Posterior vena cava (tissue), 2 donors: ENCODE measurements at regions of chr2 and their contacts with region 1.

Region 1: DNA sequence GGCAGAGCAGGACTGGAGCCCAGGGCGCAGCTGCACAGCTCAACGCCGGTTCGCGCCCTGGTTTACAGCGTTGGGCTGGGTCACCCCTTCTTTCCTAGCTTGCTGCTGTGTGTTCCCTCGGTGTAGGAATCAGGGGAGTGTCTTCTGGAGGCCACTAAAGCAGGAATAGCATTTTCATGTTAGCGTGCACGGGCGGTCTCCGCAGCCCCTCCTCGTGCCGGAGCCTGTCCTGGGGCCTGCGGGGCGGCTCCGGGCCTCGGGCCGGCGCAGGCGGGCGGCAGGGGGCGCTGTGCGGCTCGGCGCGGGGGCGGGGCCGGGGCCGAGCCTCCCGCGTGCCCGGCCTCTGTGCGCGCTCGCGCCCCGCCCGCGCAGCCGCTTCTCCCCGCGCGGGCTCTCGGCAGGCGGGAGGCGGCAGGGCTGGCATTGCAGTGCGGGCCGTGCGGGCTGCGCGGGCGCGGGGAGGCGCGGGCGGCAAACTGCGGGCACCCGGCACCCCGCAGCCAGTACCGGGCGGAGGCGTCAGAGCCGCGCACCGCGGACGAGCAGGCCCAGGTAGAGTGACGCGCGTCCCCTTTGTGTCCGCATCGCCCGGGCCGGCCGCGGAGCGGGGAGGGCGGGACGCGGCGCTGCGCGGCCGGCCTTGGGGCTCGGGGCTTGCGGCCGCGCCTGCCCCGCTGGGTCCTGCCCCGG is at the start of gene RNF144A:
- DNase-seq: no peak
- total RNA-seq, gene RNF144A: 9.4 to 11.8 TPM

Region 2: GRCh38 chr2:7026742-7027141 is 109.5 kb after region 1 on chr2:
- intact Hi-C with region 1: loop called (anchors 10 kb)
- DNase-seq: no peak

Region 3: DNA sequence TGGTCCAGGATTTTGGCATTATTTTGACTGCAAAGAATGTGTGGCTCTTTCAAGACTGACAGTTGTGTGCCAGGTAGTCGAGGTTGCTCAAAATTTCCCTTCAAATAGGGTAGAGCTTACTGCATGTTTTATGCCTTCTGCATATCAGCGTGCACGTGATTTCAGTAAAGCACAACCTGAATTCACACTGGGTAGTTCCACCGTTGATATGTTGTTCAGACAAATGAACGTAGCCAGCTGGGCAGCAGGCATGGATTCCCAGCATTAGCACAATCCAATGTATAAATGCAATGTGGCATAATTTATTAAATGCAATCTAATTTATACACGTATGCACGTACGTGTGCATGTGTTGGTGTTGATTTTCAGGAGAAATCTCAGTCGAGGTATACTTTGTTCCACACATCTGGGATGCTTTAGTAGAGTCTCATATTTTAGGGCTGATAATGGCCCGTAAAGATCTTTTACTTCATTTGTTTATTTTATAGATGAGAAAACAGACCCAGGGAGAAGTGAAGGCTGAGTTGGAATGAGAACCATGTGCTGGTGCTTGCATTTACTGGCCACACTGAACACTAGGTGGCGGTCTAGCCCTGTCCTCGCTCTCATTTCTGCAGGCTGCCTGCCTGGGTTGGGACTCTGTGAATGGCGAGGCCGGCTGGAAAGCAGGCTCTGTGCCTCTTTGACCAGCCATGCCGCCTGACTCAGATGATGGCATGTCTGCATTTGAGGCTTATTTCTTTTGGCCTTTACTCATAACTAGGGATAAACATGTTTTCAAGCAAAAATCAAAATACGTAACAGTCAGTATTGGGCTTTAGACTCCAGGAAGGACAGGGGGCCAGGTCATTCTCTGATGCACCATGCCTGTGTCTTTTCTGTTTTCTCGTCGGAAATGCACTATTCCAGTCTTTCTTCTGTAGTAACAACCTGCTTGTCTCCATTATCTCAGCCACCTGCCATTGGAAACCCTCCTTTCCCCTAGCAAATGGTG is 120.4 kb after region 1 on chr2:
- intact Hi-C with region 1: loop called in 1 of 2 experiments (anchors 10 kb)
- DNase-seq: peak; percentile 91

Region 4: DNA sequence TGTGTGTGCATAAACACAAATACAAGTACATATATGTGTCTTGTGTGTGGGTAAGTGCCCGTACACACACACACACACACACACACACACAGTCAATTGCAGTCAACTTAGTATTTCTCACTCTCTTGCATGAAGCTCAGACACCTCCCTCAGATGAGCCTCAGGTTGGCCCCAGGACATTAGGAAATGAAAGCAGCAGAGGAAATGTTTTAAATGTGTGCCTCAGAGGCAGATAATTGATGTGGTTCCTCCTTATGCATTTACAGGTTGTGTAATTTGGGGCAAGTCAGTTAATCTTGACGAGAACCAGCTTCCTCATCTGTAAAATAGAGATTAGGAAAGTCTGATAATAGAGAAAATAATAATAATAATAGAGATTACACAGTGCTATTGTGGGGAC is 950.7 kb after region 1 on chr2:
- intact Hi-C with region 1: no loop called
- DNase-seq: no peak